Psoas muscle (tissue), 8 donors: ENCODE measurements at regions of chr17 and their contacts with region 1.

Region 1: GRCh38 chr17:20009302-20010098 is at the start of gene SPECC1:
- DNase-seq: peak; percentile 85 to 89
- ATAC-seq: peak; percentile 46 to 98 (median 95)
- H3K4me3 ChIP-seq: peak within 1 kb of the TSS; percentile 72
- H3K27ac ChIP-seq: peak within 1 kb of the TSS; percentile 43
- H3K4me1 ChIP-seq: peaks cover 4% of the 10 kb centered on the region
- H3K27me3 ChIP-seq: peaks cover 0 to 63% (median 7%) of the 10 kb centered on the region in 3 donors
- CTCF ChIP-seq: peak; percentile 97
- total RNA-seq, gene SPECC1: 4.7 to 11.3 (median 9.6) TPM

Region 2: DNA sequence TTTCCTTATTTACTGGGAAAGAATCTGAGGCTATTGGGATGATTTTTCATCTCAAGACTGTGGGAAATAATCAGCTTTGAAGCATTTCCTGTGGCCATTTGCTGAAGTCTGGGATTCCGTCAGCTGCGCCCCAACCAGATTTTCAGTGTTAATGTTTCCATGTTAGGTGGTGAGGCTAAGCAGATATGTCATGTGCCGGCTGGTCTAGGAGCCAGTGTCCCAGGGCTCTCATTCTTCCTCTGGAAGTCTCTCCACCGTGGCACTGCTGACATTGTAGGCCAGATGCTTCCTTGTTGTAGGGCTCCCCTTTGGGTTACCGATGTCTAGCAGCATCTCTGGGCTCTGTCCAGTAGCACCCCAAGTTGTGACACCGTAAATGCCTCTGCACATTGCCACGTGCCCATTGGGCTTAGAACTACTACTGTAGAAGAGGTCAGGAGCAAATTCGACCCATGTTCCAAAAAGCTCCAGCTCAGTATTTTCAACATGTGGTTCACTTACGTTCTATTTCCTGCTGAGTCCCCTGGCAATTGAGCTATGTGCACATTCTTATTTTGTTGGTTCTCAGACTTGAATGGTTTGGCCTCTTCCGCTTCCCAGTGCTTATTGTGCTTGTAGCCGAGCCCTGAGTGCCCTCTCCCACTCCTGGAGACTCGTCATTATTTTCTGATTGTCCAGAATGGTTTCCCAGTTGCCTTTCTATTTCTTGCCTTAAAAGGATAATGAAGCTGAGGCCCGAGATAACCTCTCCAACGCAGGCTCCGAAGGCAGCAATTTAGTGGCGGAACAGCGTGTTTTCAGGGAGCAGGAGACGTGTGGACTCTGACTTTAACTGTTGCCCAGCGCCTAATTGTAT is 81.9 kb after region 1 on chr17:
- intact Hi-C with region 1: loop called in 1 of 2 experiments (anchors 5 kb)
- DNase-seq: no peak
- ATAC-seq: peak; percentile 43 to 80 (median 62)
- H3K4me3 ChIP-seq: no peak overlapping the region
- H3K27ac ChIP-seq: peak overlapping the region; percentile 78
- H3K4me1 ChIP-seq: peaks cover 7% of the 10 kb centered on the region
- H3K27me3 ChIP-seq: peaks cover 0 to 3% (median 1%) of the 10 kb centered on the region in 3 donors
- CTCF ChIP-seq: no peak